HepG2 (cell line): ENCODE measurements at regions of chr15 and their contacts with region 1.

Region 1: DNA sequence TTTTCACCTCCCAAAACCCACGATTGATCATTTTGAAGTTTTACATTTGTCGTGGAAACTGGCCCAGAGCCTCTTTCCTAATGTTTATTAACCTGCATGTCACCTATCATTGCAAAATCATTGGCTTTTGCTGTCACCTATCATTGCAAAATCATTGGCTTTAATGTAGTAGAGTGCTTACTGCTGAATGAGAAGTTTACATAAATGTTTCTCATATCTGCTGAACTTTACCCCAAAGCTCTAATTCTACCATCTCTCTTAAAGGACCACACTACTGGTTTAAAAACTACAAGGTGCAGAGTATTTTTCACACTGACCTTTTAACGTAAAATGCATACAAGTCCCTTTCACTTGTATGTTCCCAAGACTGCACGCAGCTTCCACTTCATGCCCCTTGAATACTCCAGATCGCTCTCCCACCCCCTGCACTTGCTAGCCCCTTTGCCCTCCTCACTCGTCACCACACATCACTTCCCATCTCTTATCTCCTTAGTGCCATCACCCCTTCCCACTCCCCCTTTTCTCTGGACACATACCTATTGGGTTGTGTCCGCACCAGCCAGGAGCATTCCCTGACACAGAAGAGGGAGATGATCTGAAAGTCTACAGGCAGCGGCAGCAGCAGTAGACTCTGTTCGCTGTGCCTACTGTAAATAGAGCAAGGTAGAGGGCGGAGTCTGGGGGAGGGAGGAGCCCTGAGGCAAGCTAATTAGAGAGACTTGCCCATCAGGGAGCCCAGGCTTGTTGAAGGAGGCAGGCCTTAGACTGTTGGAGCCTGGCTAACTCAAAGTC is 30.2 kb upstream of the ATOSA start:
- DNase-seq: peak; percentile 51
- ATAC-seq: peak; percentile 99
- H3K4me3 ChIP-seq: peak overlapping the region; percentile 54 to 69 (median 65)
- H3K27ac ChIP-seq: peak overlapping the region; percentile 48
- H3K4me1 ChIP-seq: peaks cover 27% of the 10 kb centered on the region
- H3K27me3 ChIP-seq: no peaks in the 10 kb centered on the region
- CTCF ChIP-seq: no peak
- EP300 ChIP-seq: peak in 1 of 2 experiments; percentile 36; a peak in 1 of 4 replicates
- POLR2A ChIP-seq: 0 out of 4 replicates have a peak, but pooled peaks of 1 of the 2 experiments have one; percentile 40
- RAD21 ChIP-seq: no peak

Region 2: DNA sequence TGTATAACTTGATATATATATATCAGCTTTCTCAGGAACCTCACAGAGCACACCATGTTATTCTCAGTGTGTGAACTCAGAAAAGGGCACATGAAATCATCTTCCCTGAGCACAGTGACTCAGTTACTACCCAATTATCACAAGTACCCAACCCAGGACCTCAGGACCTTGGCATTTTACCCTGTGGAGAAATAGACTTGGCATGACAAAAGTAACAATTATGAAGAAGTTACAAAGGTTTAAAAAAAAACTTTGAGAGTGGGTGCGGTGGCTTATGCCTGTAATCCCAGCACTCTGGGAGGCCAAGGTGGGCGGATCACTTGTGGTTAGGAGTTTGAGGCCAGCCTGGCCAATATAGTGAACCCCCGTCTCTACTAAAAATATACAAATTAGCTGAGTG is 28.3 kb after region 1 on chr15:
- CTCF ChIA-PET with region 1: no interaction called
- POLR2A ChIA-PET with region 1: no interaction called
- in situ Hi-C with region 1: no loop called
- intact Hi-C with region 1: no loop called
- DNase-seq: no peak
- ATAC-seq: no peak
- H3K4me3 ChIP-seq: no peak overlapping the region
- H3K27ac ChIP-seq: no peak overlapping the region
- H3K4me1 ChIP-seq: peaks cover 30% of the 10 kb centered on the region
- H3K27me3 ChIP-seq: no peaks in the 10 kb centered on the region
- CTCF ChIP-seq: no peak
- EP300 ChIP-seq: no peak
- POLR2A ChIP-seq: no peak
- RAD21 ChIP-seq: no peak

Region 3: DNA sequence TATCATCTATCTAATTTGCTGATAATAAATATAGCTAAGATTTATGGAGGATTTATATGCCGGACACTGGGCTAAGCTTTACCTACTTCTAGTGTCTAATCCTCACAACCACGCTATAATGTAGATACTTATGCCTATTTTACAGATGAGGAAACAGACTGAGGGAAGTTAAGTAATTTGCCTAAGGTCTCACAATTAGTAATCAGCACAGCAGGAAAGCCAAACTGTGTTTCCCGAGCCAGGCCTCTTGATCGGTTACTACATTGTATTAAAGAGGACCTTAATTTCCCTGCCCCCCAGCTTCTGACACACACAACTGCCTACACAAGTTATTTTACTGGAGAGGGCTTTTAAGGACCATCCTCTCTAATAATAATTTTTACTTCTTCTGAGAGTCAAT is 39.9 kb after region 1 on chr15:
- CTCF ChIA-PET with region 1: no interaction called
- POLR2A ChIA-PET with region 1: no interaction called
- in situ Hi-C with region 1: no loop called
- intact Hi-C with region 1: loop called (anchors 1 kb)
- DNase-seq: no peak
- ATAC-seq: no peak
- H3K4me3 ChIP-seq: no peak overlapping the region
- H3K27ac ChIP-seq: no peak overlapping the region
- H3K4me1 ChIP-seq: peaks cover 15% of the 10 kb centered on the region
- H3K27me3 ChIP-seq: no peaks in the 10 kb centered on the region
- CTCF ChIP-seq: no peak
- EP300 ChIP-seq: no peak
- POLR2A ChIP-seq: no peak
- RAD21 ChIP-seq: no peak

Region 4: DNA sequence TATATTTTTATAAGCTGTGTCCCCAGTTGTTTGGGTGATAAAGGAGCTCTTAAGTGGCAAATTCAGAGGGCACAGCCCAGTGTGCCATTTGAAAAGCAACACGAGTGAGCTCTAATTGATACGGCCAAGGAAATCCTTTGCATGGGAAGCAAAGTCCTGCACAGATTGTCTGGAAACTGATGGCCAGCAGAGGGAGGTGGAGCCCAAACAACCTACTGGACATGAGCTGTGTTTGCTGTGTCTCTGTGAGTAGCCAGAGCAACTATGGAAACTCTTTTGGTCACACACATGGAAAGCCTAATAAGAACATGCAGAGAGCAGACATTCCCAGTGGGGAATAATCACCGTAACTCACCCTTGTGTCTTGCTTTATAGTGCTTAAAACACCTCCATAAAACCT is 56.4 kb after region 1 on chr15:
- CTCF ChIA-PET with region 1: no interaction called
- POLR2A ChIA-PET with region 1: no interaction called
- in situ Hi-C with region 1: no loop called
- intact Hi-C with region 1: no loop called
- DNase-seq: peak; percentile 33
- ATAC-seq: peak; percentile 84
- H3K4me3 ChIP-seq: no peak overlapping the region
- H3K27ac ChIP-seq: no peak overlapping the region
- H3K4me1 ChIP-seq: peaks cover 11% of the 10 kb centered on the region
- H3K27me3 ChIP-seq: no peaks in the 10 kb centered on the region
- CTCF ChIP-seq: peak; percentile 64
- EP300 ChIP-seq: no peak
- POLR2A ChIP-seq: no peak
- RAD21 ChIP-seq: peak; percentile 52; the same call in 1 of the 2 replicates